Activated CD4-positive, alpha-beta memory T cell treated with anti-CD3 and anti-CD28 coated beads for 36 hours (primary cell): ENCODE measurements at regions of chr21 and their contacts with region 1.

Region 1: DNA sequence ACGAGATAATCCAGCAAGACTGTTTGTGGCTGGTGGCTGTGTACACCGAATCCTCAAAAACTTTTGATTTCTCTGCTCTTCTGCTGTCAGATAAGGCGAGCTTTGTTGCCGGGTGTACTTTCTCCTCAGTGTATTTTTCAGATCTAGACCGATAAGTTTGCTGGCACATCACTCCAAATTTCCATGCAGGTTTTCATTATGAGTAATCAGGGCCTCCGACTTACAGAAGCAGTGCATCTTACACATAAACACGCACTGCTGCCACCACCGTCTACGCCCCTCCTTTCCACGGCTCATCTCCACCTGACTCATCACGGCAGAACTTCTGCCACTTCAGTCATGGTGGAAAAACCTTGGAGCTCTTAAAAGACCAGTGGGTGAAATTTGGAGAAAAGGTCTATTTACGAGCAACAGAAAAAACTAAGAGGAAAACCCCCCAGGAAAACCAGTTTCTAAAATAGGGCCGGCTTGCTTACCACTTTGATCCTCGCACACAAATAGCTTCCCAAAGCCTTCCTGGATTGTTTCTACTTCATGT is 7.7 kb downstream of the ZBTB21 start:
- DNase-seq: peak; percentile 92
- H3K4me3 Mint-ChIP-seq: peak overlapping the region; percentile 37
- H3K27ac Mint-ChIP-seq: peak overlapping the region; percentile 86
- H3K4me1 Mint-ChIP-seq: peaks cover 61% of the 10 kb centered on the region
- H3K27me3 Mint-ChIP-seq: no peaks in the 10 kb centered on the region

Region 2: GRCh38 chr21:41879190-41879998 is 123.1 kb before region 1 on chr21 and contains the start of gene PRDM15:
- CTCF ChIA-PET with region 1: interaction called, 3 read pairs
- POLR2A ChIA-PET with region 1: interaction called, 7 read pairs
- intact Hi-C with region 1: loop called (anchors 2 kb)
- DNase-seq: peak; percentile 88
- H3K4me3 Mint-ChIP-seq: peak within 1 kb of the TSS; percentile 85
- H3K27ac Mint-ChIP-seq: peak within 1 kb of the TSS; percentile 94
- H3K4me1 Mint-ChIP-seq: peaks cover 21% of the 10 kb centered on the region
- H3K27me3 Mint-ChIP-seq: no peaks in the 10 kb centered on the region
- total RNA-seq, gene PRDM15: 8.5 to 9.9 TPM

Region 3: GRCh38 chr21:41926117-41926806 is 76.2 kb before region 1 on chr21:
- CTCF ChIA-PET with region 1: interaction called, 4 read pairs
- POLR2A ChIA-PET with region 1: interaction called, 12 read pairs
- intact Hi-C with region 1: loop called (anchors 2 kb)
- DNase-seq: peak; percentile 36
- H3K4me3 Mint-ChIP-seq: peak overlapping the region; percentile 89
- H3K27ac Mint-ChIP-seq: peak overlapping the region; percentile 96
- H3K4me1 Mint-ChIP-seq: peaks cover 52% of the 10 kb centered on the region
- H3K27me3 Mint-ChIP-seq: no peaks in the 10 kb centered on the region